CD8-positive, alpha-beta T cell (primary cell): ENCODE measurements at regions of chr16 and their contacts with region 1.

Region 1: DNA sequence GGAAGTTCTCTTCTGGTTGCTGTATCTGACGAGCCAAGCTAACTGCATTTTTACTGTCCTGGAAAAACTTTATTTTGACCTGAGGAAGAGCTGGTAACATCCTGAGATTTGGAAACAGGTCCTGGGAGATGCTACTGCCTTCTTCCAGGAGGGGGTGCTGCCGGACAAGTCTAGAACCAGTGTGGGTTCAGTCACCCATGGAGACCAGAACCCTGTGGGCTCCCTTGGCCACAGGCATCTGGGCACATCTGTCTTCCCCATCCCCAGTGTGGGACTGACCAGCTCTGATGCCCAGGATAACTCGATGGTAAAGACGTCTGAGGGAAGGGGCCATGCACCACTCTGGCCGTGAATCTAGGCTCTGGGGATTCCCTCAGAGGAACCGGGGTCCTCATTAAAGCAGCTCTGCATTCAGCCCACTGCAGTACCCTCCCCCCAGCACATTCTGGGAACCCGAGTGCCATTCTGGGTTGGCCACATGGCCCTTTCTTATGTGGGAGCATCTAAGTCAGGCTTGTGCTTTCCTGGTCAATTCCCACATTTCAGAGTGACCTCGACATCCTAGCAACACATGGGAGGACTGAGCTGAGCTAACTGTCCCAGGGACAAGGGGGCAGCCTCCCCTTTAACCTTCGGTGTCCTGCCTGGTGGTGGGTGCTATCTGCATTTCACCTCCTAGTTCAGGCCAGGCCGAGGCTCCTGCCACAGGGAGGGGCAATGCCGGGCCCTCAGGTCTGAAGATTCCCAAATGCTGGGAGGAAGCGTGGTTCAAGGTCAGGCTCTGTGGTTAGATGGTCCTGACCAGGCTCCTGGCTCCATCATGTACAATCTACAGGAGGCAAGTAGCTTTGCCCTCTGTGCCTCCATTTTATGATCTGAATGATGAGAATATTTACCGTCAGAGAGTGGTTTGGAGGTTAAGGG is 6.4 kb downstream of the C16orf86 start:
- DNase-seq: peak in 5 of 9 experiments; percentile 50 to 60 (median 53)
- ATAC-seq: no peak
- H3K4me3 ChIP-seq: no peak overlapping the region
- H3K4me3 Mint-ChIP-seq: no peak overlapping the region
- H3K27ac ChIP-seq: no peak overlapping the region
- H3K27ac Mint-ChIP-seq: no peak overlapping the region
- H3K4me1 ChIP-seq: peaks cover 4% of the 10 kb centered on the region
- H3K4me1 Mint-ChIP-seq: peaks cover 5% of the 10 kb centered on the region
- H3K27me3 ChIP-seq: no peaks in the 10 kb centered on the region
- H3K27me3 Mint-ChIP-seq: no peaks in the 10 kb centered on the region
- CTCF ChIP-seq: peak; percentile 25

Region 2: DNA sequence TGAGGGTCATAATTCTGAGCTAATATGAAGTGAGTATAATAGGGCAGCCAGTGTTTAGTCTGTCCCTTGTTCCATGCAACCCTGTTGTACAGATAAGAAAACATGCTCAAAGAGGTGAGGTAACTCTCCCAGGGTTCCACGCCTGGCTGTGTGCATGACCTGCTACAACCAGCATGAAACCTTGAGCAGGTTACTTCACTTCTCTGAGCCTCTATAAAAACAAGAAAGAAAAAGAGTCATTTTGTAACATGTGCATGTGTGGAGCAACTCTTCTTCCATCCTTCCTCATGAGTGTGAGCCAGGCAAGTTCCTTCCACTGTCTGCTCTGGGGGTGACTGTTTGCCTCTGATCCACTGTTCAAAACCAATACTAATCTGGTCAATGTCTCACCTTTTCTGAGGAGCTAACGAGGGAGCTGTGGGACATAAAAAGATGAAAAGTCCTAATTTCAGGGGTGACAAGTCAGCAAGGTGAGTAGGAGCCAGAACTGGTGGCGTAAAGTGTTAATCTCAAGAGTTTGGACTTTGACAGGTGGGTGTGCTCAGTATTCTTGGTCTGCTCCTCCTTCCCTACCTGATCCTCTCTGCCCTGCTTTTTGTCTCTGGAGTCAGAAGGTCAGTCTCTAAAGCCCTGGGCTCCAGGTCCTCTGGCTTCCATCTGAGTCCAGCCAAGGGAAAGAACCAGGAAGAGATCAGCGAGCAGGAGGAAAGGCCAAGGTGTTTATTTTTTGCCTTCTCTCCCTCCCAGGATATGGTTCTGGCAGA is 24.6 kb after region 1 on chr16:
- CTCF ChIA-PET with region 1: no interaction called
- POLR2A ChIA-PET with region 1: no interaction called
- intact Hi-C with region 1: no loop called
- DNase-seq: no peak
- ATAC-seq: no peak
- H3K4me3 ChIP-seq: no peak overlapping the region
- H3K4me3 Mint-ChIP-seq: no peak overlapping the region
- H3K27ac ChIP-seq: no peak overlapping the region
- H3K27ac Mint-ChIP-seq: no peak overlapping the region
- H3K4me1 ChIP-seq: no peaks in the 10 kb centered on the region
- H3K4me1 Mint-ChIP-seq: no peaks in the 10 kb centered on the region
- H3K27me3 ChIP-seq: no peaks in the 10 kb centered on the region
- H3K27me3 Mint-ChIP-seq: no peaks in the 10 kb centered on the region
- CTCF ChIP-seq: no peak

Region 3: DNA sequence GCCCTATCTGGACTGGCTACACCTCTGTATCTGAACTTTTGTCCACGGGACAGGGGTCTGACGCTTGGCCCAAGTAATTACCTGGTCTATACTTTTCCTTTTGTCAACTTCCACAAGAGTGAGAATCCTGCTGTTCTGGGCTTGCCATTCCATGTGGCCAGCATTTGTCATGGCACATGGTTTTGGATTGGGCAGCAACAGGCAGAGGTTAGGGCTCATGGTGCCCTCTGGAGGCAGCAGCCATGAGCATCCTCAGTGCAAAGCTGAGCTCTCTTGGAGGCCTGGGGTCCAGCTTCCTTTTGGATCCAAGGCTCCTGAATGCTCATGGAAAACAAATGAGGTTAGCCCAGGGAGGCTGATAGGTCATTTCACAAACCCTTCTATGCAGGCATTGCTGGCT is 192.3 kb after region 1 on chr16:
- CTCF ChIA-PET with region 1: interaction called, 4 read pairs
- POLR2A ChIA-PET with region 1: no interaction called
- intact Hi-C with region 1: loop called in 1 of 2 experiments (anchors 5 kb)
- DNase-seq: peak in 2 of 9 experiments; percentile 40 to 51
- ATAC-seq: peak; percentile 61
- H3K4me3 ChIP-seq: no peak overlapping the region
- H3K4me3 Mint-ChIP-seq: no peak overlapping the region
- H3K27ac ChIP-seq: no peak overlapping the region
- H3K27ac Mint-ChIP-seq: no peak overlapping the region
- H3K4me1 ChIP-seq: no peaks in the 10 kb centered on the region
- H3K4me1 Mint-ChIP-seq: peaks cover 7% of the 10 kb centered on the region
- H3K27me3 ChIP-seq: no peaks in the 10 kb centered on the region
- H3K27me3 Mint-ChIP-seq: no peaks in the 10 kb centered on the region
- CTCF ChIP-seq: no peak

Region 4: GRCh38 chr16:67928561-67929364 is 255.8 kb after region 1 on chr16:
- CTCF ChIA-PET with region 1: interaction called, 4 read pairs
- POLR2A ChIA-PET with region 1: no interaction called
- intact Hi-C with region 1: loop called in 1 of 2 experiments (anchors 1 kb)
- DNase-seq: peak; percentile 48 to 82 (median 75)
- ATAC-seq: peak; percentile 97
- H3K4me3 ChIP-seq: no peak overlapping the region
- H3K4me3 Mint-ChIP-seq: no peak overlapping the region
- H3K27ac ChIP-seq: peak overlapping the region in 1 of 2 experiments; percentile 31
- H3K27ac Mint-ChIP-seq: no peak overlapping the region
- H3K4me1 ChIP-seq: no peaks in the 10 kb centered on the region
- H3K4me1 Mint-ChIP-seq: peaks cover 3% of the 10 kb centered on the region
- H3K27me3 ChIP-seq: no peaks in the 10 kb centered on the region
- H3K27me3 Mint-ChIP-seq: no peaks in the 10 kb centered on the region
- CTCF ChIP-seq: peak; percentile 76